Aorta (tissue), 5 donors: ENCODE measurements at regions of chr9 and their contacts with region 1.

Region 1: DNA sequence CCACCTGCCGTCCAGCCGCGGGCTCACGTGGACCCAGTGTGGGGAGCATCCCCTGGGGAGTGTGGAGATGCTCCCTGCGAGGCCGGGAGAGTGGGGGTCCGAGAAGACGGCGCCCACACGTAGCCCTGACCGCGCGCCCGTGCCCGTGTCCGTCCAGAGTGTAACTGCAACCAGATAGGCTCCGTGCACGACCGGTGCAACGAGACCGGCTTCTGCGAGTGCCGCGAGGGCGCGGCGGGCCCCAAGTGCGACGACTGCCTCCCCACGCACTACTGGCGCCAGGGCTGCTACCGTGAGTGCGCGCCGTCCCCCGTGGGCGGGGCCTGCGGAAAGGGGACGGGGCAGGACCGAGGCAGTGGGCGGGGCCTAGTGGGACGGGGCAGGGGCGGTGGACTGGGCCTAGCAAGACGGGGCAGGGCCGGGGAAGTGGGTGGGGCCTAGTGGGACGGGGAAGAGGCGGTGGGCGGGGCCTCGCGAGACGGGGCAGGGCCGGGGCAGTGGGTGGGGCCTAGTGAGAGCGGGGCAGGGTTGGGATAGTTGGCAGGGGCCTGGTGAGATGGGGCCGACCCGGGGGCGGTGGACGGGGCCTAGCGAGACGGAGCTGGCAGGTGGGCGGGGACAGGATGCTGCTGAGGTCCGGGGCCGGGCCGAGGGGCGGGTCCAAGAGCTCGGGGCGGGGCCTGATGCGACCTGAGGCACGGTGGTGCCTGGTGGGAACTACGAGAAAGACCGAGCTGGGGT is 79.1 kb downstream of the NTNG2 start:
- DNase-seq: peak; percentile 99
- ATAC-seq: peak; percentile 94
- H3K4me3 ChIP-seq: peak overlapping the region; percentile 52 to 62
- H3K27ac ChIP-seq: no peak overlapping the region
- H3K4me1 ChIP-seq: no peaks in the 10 kb centered on the region
- H3K27me3 ChIP-seq: no peaks in the 10 kb centered on the region

Region 2: GRCh38 chr9:131762356-131762932 is 478.5 kb before region 1 on chr9:
- intact Hi-C with region 1: loop called in 1 of 2 experiments (anchors 5 kb)
- DNase-seq: peak; percentile 80 to 93
- ATAC-seq: peak; percentile 93
- H3K4me3 ChIP-seq: no peak overlapping the region
- H3K27ac ChIP-seq: no peak overlapping the region
- H3K4me1 ChIP-seq: no peaks in the 10 kb centered on the region
- H3K27me3 ChIP-seq: no peaks in the 10 kb centered on the region

Region 3: DNA sequence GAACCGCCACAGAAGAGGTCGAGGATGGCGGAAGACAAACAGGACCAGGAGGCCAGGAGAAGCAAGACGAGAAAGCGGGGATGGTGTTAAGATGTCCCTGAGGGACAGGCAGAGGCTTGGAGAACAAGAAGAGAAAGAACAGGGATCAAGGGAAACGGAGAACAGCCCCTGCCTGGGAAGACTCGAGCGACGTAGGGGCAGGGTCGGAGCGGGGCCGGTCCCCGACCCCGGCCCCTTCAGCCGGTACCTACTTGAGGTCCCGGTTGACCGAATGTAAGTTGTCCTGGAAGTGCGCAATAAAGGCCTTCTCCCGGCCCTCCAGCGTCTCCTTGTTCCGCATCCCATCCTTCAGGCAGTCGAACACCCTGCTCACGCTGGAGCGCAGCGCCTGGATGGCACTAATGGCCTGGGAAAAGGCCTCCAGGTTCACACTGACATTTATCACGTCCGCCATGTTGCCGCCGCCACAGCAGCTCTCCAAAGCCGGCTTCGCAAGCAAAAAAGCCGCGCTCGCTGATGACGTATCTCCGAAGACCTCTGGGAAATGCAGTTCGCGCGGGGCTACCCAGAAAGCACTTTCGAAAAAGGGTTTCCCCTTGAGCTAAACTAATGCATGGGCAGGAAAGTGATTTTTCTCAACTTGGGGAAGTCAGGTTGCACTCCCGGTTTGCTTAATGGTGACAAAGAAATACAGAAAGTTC is 161.4 kb before region 1 on chr9 and contains the start of gene MED27:
- intact Hi-C with region 1: loop called (anchors 10 kb)
- DNase-seq: peak; percentile 97 to 99
- ATAC-seq: peak; percentile 94
- H3K4me3 ChIP-seq: peak within 1 kb of the TSS; percentile 79 to 89
- H3K27ac ChIP-seq: peak within 1 kb of the TSS; percentile 11 to 20
- H3K4me1 ChIP-seq: peaks cover 2 to 13% of the 10 kb centered on the region in 2 donors
- H3K27me3 ChIP-seq: no peaks in the 10 kb centered on the region
- total RNA-seq, gene MED27: 16.8 to 25.1 TPM

Region 4: GRCh38 chr9:132160802-132161742 is 79.9 kb before region 1 on chr9:
- intact Hi-C with region 1: loop called in 1 of 2 experiments (anchors 5 kb)
- DNase-seq: no peak
- ATAC-seq: no peak
- H3K4me3 ChIP-seq: peak overlapping the region; percentile 81
- H3K27ac ChIP-seq: no peak overlapping the region
- H3K4me1 ChIP-seq: no peaks in the 10 kb centered on the region
- H3K27me3 ChIP-seq: no peaks in the 10 kb centered on the region

Region 5: DNA sequence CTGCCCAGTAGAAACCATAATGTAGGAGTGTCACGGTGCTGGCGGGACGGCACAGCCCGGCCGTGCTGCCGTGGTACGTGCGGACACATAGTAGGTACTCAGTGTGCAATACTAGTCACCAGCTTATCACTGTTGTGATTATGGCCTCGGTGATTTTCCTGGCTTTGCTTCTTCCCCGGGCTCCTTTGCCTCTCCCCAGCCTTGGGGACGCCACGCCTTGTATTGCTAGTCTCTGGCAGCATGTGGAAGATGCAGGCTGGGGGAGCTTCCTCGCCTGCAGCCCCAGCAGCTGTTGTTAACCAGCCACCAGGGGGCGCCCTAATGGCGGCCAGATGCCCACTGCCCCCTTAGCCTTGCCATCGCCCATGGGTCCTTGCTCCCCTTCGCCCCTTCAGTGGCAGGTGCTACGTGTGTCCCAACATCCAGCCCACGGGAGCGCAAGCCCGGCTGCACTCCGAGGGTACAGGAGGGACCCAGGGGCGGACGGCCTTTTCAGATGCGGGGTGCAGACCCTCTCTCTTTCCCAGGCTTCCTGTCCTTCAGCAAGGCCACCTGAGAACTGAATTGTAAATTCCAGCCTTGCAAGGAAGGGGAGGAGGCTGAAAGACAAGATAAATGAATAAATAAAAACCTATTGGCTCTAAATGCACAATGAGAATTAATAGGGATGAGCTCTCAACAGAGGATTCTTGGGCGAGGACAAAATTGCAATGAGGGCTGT is 71.1 kb before region 1 on chr9:
- intact Hi-C with region 1: loop called (anchors 1 to 5 kb)
- DNase-seq: peak; percentile 64 to 85
- ATAC-seq: peak; percentile 62
- H3K4me3 ChIP-seq: no peak overlapping the region
- H3K27ac ChIP-seq: no peak overlapping the region
- H3K4me1 ChIP-seq: no peaks in the 10 kb centered on the region
- H3K27me3 ChIP-seq: no peaks in the 10 kb centered on the region

Region 6: GRCh38 chr9:132560616-132561202 is 319.8 kb after region 1 on chr9:
- intact Hi-C with region 1: no loop called
- DNase-seq: no peak
- ATAC-seq: no peak
- H3K4me3 ChIP-seq: no peak overlapping the region
- H3K27ac ChIP-seq: no peak overlapping the region
- H3K4me1 ChIP-seq: no peaks in the 10 kb centered on the region
- H3K27me3 ChIP-seq: no peaks in the 10 kb centered on the region